ENCODE measurements at regions of chrX and their contacts with region 1.

Region 1: DNA sequence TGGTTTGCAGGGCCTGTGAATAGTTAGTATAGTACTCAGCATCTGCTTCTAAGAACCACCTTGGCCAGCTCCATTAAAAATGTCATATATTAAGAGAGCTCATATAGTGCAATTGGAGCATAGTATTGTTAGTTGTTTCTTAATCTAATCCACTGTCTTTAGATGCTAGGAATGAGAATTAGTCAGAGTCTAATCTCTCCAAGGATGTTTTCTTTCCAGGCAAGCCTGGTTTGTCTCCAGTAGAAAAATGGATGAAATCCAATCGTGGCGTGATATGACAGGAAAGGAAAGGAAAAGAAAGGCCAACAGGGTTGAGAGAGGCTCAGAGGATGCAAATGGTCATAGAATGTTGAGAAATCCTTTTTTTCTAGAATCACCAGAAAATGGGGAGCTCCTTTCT is 15.0 kb upstream of the TMEM164 start:
- DNase-seq: no peak
- ATAC-seq: no peak
- H3K4me3 ChIP-seq: no peak overlapping the region
- H3K27ac ChIP-seq: no peak overlapping the region
- H3K4me1 ChIP-seq: no peaks in the 10 kb centered on the region
- H3K27me3 ChIP-seq: no peaks in the 10 kb centered on the region; the same call in 1 of the 2 replicates
- CTCF ChIP-seq: no peak

Region 2: DNA sequence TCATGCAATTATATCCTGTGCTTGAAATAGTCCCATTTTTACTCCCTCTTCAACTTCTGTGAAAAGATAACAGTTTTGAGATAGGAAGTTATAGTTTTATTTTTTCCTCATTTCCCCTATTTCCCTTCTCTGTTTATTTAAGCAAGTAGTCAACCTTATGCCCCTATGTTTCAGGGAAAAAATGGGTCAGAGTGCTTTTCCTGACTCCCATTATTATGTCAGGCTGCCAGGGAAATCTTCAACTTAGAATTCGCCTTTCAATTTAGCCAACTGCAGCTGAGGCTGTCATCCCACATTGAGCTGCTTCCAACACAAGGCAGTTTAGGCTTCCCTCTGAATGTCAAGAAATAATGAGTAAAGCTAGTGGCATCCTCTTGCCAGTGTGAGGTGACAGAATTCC is 409.0 kb before region 1 on chrX:
- CTCF ChIA-PET with region 1: no interaction called
- POLR2A ChIA-PET with region 1: no interaction called
- in situ Hi-C with region 1: no loop called
- intact Hi-C with region 1: no loop called
- DNase-seq: no peak
- ATAC-seq: no peak
- H3K4me3 ChIP-seq: no peak overlapping the region
- H3K27ac ChIP-seq: no peak overlapping the region
- H3K4me1 ChIP-seq: no peaks in the 10 kb centered on the region
- H3K27me3 ChIP-seq: no peaks in the 10 kb centered on the region
- CTCF ChIP-seq: no peak

Region 3: DNA sequence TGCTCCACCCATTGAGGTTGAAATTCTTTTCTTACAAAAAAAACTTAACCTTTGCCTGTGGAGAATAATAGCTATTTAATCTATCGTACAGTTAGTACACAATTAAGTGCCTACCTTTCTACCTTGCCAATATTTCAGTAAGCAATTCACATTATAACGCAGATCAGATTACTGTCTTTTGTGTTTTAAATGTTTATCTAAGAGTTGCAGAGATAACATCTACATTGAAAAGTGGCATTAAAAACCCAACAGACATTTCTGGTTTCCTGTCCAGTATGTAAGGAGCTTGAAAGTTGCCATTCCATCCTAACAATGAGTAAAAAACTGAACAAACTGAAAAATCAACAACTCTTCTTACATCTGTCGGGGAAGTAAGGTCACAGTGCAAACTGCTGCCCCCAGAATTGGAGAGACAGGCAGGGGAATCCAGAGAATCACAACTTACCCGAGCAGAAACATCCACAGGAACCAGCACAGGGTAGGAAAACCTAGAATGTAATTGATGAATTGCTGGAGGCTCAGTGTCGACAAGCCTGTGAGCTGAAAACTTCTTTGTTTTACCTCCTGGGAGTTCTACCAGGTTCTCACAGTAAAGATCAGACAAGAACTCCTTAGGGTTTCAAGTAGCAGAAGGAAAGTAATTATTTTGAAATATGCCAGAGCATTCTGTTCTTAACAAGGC is 227.5 kb before region 1 on chrX:
- CTCF ChIA-PET with region 1: no interaction called
- POLR2A ChIA-PET with region 1: interaction called, 11 read pairs
- in situ Hi-C with region 1: no loop called
- intact Hi-C with region 1: no loop called
- DNase-seq: no peak
- ATAC-seq: no peak
- H3K4me3 ChIP-seq: no peak overlapping the region
- H3K27ac ChIP-seq: no peak overlapping the region
- H3K4me1 ChIP-seq: no peaks in the 10 kb centered on the region
- H3K27me3 ChIP-seq: peaks cover 2% of the 10 kb centered on the region; the same call in 1 of the 2 replicates
- CTCF ChIP-seq: no peak

Measured in Panc1 (cell line).